ENCODE measurements at regions of chr9 and their contacts with region 1.

Region 1: GRCh38 chr9:33159760-33160127 is 7.4 kb downstream of the B4GALT1 start:
- DNase-seq: peak; percentile 77
- H3K4me3 Mint-ChIP-seq: peak overlapping the region; percentile 96
- H3K27ac Mint-ChIP-seq: peak overlapping the region; percentile 89
- H3K4me1 Mint-ChIP-seq: peaks cover 76% of the 10 kb centered on the region
- H3K27me3 Mint-ChIP-seq: no peaks in the 10 kb centered on the region
- CTCF ChIP-seq: no peak

Region 2: GRCh38 chr9:32968101-32969011 is 191.4 kb before region 1 on chr9:
- CTCF ChIA-PET with region 1: no interaction called
- POLR2A ChIA-PET with region 1: no interaction called
- intact Hi-C with region 1: no loop called
- DNase-seq: peak; percentile 59
- H3K4me3 Mint-ChIP-seq: no peak overlapping the region
- H3K27ac Mint-ChIP-seq: no peak overlapping the region
- H3K4me1 Mint-ChIP-seq: no peaks in the 10 kb centered on the region
- H3K27me3 Mint-ChIP-seq: no peaks in the 10 kb centered on the region
- CTCF ChIP-seq: peak; percentile 54

Region 3: DNA sequence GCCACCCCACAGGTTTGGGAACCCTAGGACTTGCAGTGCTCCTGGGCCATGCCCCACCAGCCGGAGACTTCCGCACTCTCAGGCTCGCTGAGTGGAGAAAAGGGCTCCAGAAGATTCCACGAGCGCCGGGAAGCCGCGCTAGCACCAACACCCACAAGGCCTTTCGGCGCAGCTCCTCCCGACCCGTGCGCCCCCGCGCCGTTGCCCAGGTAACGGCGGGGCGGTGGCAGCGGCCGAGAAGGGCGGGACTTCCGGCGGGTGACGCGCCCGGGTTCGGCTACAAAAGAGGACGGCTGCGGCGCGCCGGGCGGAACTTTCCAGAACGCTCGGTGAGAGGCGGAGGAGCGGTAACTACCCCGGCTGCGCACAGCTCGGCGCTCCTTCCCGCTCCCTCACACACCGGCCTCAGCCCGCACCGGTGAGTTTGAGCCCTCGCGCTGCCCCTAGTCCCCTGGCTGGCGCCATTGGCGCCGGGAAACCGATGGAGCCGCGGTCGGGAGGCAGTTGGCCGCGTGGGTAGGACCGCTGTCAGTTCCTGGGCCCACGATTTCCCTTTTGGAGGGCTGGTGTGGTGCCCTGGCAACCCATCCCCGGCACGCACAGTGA is 134.7 kb before region 1 on chr9 and contains the start of gene DNAJA1:
- CTCF ChIA-PET with region 1: interaction called, 3 read pairs
- POLR2A ChIA-PET with region 1: interaction called, 59 read pairs
- intact Hi-C with region 1: no loop called
- DNase-seq: peak; percentile 93
- H3K4me3 Mint-ChIP-seq: peak within 1 kb of the TSS; percentile 93
- H3K27ac Mint-ChIP-seq: peak within 1 kb of the TSS; percentile 94
- H3K4me1 Mint-ChIP-seq: peaks cover 41% of the 10 kb centered on the region
- H3K27me3 Mint-ChIP-seq: no peaks in the 10 kb centered on the region
- CTCF ChIP-seq: no peak
- total RNA-seq, gene DNAJA1: 58.2 and 82.7 TPM in 2 replicates

Region 4: GRCh38 chr9:33130508-33130911 is 29.2 kb before region 1 on chr9:
- CTCF ChIA-PET with region 1: interaction called, 13 read pairs
- POLR2A ChIA-PET with region 1: interaction called, 242 read pairs
- intact Hi-C with region 1: no loop called
- DNase-seq: peak; percentile 75
- H3K4me3 Mint-ChIP-seq: peak overlapping the region; percentile 22
- H3K27ac Mint-ChIP-seq: peak overlapping the region; percentile 96
- H3K4me1 Mint-ChIP-seq: peaks cover 60% of the 10 kb centered on the region
- H3K27me3 Mint-ChIP-seq: no peaks in the 10 kb centered on the region
- CTCF ChIP-seq: no peak

Region 5: DNA sequence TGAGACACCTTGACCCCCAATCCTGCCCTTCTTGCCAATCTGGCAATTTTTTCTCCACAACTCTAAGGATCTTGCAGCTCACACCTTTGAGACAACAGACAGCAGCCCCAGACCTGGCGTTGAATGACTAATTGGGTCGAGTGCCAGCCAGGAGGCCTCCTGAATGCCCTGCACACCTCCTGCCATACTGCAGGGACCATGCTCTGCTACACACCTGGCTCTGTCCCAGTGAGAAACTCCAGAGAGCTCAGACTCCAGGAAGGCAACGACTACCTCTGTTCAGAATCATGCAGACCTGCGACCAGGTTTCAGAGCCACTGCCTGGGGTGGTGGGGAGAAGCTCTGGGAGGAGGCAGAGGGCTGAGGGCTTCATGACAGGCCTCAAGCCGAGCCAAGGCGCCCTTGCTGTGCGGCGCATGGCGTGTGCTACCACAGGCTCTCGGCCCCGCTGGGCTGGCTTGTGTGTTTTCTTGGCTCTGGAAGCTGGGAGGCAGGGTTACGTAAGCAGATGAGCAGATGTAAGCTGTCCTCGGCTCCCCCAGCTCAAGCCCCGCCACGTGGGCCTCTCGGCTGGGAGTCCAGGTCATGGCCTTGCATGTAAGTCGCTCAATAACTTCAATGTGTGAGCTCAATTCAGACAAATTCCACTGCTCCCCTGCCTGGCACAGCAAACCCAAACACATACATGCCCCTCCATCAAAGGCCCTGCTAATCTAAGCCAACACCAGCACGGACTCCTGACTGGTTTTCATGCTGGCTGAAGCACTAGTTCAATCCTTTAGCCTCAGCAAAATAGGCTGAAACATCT is 20.1 kb before region 1 on chr9:
- CTCF ChIA-PET with region 1: interaction called, 3 read pairs
- POLR2A ChIA-PET with region 1: interaction called, 242 read pairs
- intact Hi-C with region 1: no loop called
- DNase-seq: peak; percentile 61
- H3K4me3 Mint-ChIP-seq: no peak overlapping the region
- H3K27ac Mint-ChIP-seq: peak overlapping the region; percentile 21
- H3K4me1 Mint-ChIP-seq: peaks cover 38% of the 10 kb centered on the region
- H3K27me3 Mint-ChIP-seq: no peaks in the 10 kb centered on the region
- CTCF ChIP-seq: no peak

Region 6: DNA sequence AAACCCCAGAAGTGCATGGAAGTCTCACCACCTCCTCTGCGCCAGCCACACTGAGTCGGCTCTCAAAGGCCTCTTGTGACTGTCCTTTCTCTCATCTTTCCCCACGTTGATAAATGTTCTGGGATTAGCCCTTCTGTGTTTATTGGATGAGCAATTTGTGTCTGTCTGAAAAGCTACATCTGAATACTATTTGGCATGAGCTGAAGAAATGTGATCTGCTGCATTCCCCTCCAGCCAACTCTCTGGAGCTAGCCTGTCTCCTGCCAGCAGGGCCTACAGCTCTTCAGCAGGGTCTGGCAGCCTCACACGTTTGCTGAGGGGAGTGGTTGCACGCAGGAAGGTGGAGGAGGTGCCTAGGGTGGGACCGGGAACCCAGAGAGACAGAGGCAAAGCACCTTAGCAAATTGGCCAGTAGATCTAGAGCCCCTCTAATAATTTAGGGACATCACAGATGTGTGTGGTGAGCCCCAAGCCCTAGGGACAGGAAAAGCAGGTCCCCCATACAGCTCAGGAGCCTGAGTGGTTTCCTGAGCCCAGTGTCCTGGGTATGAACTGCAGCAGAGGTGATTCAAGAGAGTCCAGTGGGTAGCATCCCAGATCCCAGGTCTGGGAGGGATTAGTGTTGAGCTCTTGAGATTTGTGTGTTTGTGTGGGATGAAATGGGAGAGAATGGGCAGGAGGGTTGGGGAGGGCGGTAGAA is 27.9 kb after region 1 on chr9:
- CTCF ChIA-PET with region 1: no interaction called
- POLR2A ChIA-PET with region 1: interaction called, 57 read pairs
- intact Hi-C with region 1: no loop called
- DNase-seq: no peak
- H3K4me3 Mint-ChIP-seq: no peak overlapping the region
- H3K27ac Mint-ChIP-seq: no peak overlapping the region
- H3K4me1 Mint-ChIP-seq: peaks cover 29% of the 10 kb centered on the region
- H3K27me3 Mint-ChIP-seq: no peaks in the 10 kb centered on the region
- CTCF ChIP-seq: no peak

Region 7: GRCh38 chr9:33225319-33226149 is 65.8 kb after region 1 on chr9:
- CTCF ChIA-PET with region 1: interaction called, 14 read pairs
- POLR2A ChIA-PET with region 1: interaction called, 188 read pairs
- intact Hi-C with region 1: loop called (anchors 2 kb)
- DNase-seq: peak; percentile 83
- H3K4me3 Mint-ChIP-seq: no peak overlapping the region
- H3K27ac Mint-ChIP-seq: no peak overlapping the region
- H3K4me1 Mint-ChIP-seq: peaks cover 33% of the 10 kb centered on the region
- H3K27me3 Mint-ChIP-seq: no peaks in the 10 kb centered on the region
- CTCF ChIP-seq: peak; percentile 52

Region 8: DNA sequence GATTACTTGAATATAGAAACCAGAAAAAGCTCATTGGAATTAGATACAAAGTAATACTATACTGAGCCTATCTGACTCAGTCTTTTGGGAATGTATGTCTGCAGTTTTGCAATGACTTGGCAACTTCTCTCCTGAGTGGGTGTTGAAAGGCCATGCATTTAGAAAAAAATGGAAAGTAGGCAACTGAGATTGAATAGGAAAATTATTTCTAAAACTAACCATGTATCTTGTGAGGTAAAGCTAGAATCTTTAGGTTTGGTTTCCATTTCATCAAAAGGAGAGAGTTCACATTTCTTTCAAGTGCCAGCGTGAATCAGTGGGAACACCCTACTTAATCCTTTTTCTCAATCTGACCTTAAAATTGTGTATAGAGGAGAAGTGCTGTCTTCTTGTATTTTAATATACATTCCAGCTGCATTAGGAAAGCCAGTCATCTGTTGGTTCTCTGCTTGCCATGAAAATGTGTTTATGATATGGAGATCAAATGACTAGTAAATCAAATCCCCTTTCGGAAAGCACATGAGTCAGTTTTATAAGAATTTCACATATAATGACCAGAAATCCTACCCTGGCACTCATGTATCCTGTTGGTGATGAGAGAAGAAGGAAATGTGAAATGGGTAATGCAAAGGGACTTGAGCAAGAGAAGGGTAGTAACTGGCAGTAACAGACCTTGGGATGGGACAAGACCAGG is 161.0 kb after region 1 on chr9:
- CTCF ChIA-PET with region 1: no interaction called
- POLR2A ChIA-PET with region 1: interaction called, 19 read pairs
- intact Hi-C with region 1: no loop called
- DNase-seq: peak; percentile 92
- H3K4me3 Mint-ChIP-seq: peak overlapping the region; percentile 20
- H3K27ac Mint-ChIP-seq: peak overlapping the region; percentile 70
- H3K4me1 Mint-ChIP-seq: peaks cover 18% of the 10 kb centered on the region
- H3K27me3 Mint-ChIP-seq: no peaks in the 10 kb centered on the region
- CTCF ChIP-seq: no peak

Measured in MCF 10A (cell line).